Breast epithelium (tissue), 4 donors: ENCODE measurements at regions of chr6 and their contacts with region 1.

Region 1: GRCh38 chr6:137254966-137255365 is 35.8 kb upstream of the IFNGR1 start:
- DNase-seq: no peak
- H3K4me3 ChIP-seq: no peak overlapping the region
- H3K27ac ChIP-seq: no peak overlapping the region
- H3K4me1 ChIP-seq: no peaks in the 10 kb centered on the region
- H3K27me3 ChIP-seq: no peaks in the 10 kb centered on the region
- CTCF ChIP-seq: no peak
- POLR2A ChIP-seq: no peak

Region 2: DNA sequence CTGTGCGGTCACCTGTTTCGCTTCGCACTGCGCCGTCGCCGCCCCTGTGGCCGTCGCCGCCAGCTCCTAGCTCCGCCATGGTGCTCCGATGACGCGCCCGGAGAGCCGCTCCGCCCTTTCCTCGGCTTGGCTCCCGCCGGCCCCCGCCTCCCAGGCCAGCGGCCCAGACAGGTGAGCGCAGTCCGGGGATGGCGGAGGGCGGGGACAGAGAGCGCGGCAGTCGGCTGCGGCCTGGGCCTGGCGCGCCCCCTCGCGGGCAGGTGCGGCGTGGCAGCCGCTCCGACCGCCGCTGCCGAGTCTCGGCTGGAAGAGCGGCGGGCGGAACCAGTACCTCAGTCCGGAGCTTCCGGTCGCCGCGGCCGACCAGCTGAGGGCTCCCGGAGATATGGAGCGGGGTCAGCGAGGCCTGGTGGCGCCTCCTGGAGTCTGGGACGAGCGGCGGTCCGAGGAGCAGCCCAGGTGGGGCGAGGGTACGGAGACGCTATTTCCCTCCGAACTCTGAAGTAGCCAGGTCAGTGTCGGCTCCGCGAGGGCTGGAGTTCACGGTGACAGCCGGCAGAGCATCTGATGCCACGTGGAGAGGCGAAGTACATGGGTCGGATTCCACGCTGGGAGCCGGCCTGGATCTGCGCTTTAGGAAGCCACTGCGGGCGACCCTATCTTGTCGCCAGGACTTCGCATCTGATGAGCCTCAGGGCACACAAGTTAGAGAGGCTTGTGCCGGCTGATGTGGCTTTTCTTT is 704.5 kb before region 1 on chr6 and contains the start of gene MAP7:
- intact Hi-C with region 1: no loop called
- DNase-seq: peak; percentile 87 to 89
- H3K4me3 ChIP-seq: peak within 1 kb of the TSS; percentile 70 to 81 (median 76)
- H3K27ac ChIP-seq: peak within 1 kb of the TSS; percentile 94 to 95
- H3K4me1 ChIP-seq: peaks cover 0 to 4% of the 10 kb centered on the region in 2 donors
- H3K27me3 ChIP-seq: no peaks in the 10 kb centered on the region
- CTCF ChIP-seq: peak; percentile 57 to 90 (median 58)
- POLR2A ChIP-seq: no peak
- total RNA-seq, gene MAP7: 14.2 to 42.4 (median 16.4) TPM

Region 3: DNA sequence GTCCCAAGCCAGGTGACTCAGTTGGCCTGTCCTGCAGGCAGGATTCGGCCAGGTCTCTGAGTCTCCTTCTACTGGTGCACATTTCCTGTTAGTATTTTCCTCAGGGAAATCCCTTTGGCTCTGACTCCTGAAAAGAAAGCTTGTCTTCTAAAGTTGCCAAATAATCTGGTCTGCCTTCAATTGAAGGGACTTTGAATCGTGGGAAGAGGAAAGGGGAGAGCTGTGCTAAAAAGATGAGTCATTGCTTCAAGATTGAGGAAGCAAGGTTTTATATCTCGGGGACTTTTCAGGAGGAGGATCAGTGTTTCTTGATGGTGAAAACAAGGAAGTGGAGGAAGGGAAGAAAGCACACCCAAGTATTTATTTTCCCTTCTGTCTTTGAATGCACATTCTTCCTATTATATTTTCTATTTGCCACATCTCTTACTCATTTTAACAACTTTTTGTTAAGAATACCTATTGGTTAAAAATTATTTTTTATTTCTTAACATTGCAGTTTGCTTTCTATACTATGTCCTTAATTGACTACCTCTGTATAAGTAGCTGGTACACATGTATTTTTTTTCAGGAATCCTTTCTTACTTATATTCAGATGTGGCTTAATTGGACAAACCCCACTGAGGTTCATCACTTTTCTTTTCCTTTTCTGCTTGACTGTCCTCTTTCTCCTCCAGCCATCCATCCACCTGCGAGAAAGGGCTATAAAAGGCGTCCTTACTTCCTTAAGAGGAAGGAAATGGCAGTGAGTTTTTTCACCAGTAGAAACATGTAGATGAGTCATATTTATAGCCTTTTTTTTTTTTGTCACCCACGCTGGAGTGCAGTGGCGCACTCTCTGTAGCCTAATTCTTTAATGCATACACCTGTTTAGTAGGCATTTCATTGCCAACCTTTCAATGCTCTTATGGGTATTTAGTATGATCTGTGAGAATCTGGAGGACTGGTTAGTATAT is 20.8 kb before region 1 on chr6:
- intact Hi-C with region 1: no loop called
- DNase-seq: no peak
- H3K4me3 ChIP-seq: peak overlapping the region in 1 of 3 donors; percentile 8
- H3K27ac ChIP-seq: peak overlapping the region; percentile 76 to 86
- H3K4me1 ChIP-seq: peaks cover 3 to 5% of the 10 kb centered on the region in 2 donors
- H3K27me3 ChIP-seq: no peaks in the 10 kb centered on the region
- CTCF ChIP-seq: no peak
- POLR2A ChIP-seq: no peak

Region 4: GRCh38 chr6:138231381-138231897 is 976.5 kb after region 1 on chr6:
- intact Hi-C with region 1: loop called (anchors 5 kb)
- DNase-seq: no peak
- H3K4me3 ChIP-seq: no peak overlapping the region
- H3K27ac ChIP-seq: peak overlapping the region; percentile 1 to 43
- H3K4me1 ChIP-seq: no peaks in the 10 kb centered on the region
- H3K27me3 ChIP-seq: no peaks in the 10 kb centered on the region
- CTCF ChIP-seq: no peak
- POLR2A ChIP-seq: no peak